Activated CD8-positive, alpha-beta T cell treated with anti-CD3 and anti-CD28 coated beads for 36 hours (primary cell): ENCODE measurements at regions of chr19 and their contacts with region 1.

Region 1: GRCh38 chr19:7355151-7355820 is 6.5 kb downstream of the ARHGEF18 start:
- DNase-seq: no peak
- ATAC-seq: no peak
- H3K4me3 Mint-ChIP-seq: no peak overlapping the region
- H3K27ac Mint-ChIP-seq: peak overlapping the region; percentile 76
- H3K4me1 Mint-ChIP-seq: peaks cover 56% of the 10 kb centered on the region
- H3K27me3 Mint-ChIP-seq: no peaks in the 10 kb centered on the region
- CTCF ChIP-seq: no peak

Region 2: GRCh38 chr19:7098701-7099596 is 256.3 kb before region 1 on chr19:
- CTCF ChIA-PET with region 1: interaction called, 13 read pairs
- POLR2A ChIA-PET with region 1: no interaction called
- intact Hi-C with region 1: no loop called
- DNase-seq: peak; percentile 90
- ATAC-seq: peak; percentile 93
- H3K4me3 Mint-ChIP-seq: peak overlapping the region; percentile 87
- H3K27ac Mint-ChIP-seq: peak overlapping the region; percentile 84
- H3K4me1 Mint-ChIP-seq: peaks cover 16% of the 10 kb centered on the region
- H3K27me3 Mint-ChIP-seq: no peaks in the 10 kb centered on the region
- CTCF ChIP-seq: no peak

Region 3: DNA sequence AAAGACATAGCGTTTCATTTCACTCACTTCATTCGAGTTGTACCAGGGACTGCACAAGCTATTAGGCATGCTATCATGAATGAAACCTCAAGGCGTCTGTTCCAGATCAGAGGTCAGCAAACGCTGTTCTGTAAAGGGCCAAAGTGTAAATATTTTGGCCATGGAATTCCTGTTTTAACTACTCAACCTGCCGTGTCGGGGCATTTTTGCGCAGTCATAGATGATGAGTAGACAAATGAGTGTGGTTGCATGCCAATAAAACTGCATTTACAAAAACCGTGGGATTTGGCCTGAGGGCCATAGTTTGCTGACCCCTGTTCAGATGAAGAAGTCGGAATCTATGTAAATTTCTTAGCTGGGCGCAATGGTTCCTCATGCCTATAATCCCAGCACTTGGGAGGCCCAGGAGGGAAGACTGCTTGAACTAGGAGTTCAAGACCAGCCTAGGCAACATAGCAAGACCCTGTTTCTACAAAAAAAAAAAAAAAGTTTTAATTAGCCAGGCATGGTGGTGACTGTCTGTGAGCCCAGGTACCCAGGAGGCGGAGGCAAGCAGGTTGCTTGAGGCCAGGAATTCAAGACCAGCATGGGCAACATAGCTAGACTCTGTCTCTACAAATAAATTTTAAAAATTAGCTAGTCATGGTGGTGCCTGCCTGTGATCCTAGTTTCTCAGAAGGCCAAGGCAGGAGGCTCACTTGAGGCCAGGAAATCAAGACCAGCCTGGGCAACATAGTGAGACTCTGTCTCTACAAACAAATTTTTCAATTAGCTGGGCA is 67.4 kb before region 1 on chr19:
- CTCF ChIA-PET with region 1: no interaction called
- POLR2A ChIA-PET with region 1: no interaction called
- intact Hi-C with region 1: no loop called
- DNase-seq: no peak
- ATAC-seq: no peak
- H3K4me3 Mint-ChIP-seq: no peak overlapping the region
- H3K27ac Mint-ChIP-seq: no peak overlapping the region
- H3K4me1 Mint-ChIP-seq: no peaks in the 10 kb centered on the region
- H3K27me3 Mint-ChIP-seq: peaks cover 9% of the 10 kb centered on the region
- CTCF ChIP-seq: no peak

Region 4: GRCh38 chr19:7366701-7367420 is 11.6 kb after region 1 on chr19:
- CTCF ChIA-PET with region 1: interaction called, 36 read pairs
- POLR2A ChIA-PET with region 1: interaction called, 5 read pairs
- intact Hi-C with region 1: no loop called
- DNase-seq: peak; percentile 57
- ATAC-seq: peak; percentile 90
- H3K4me3 Mint-ChIP-seq: no peak overlapping the region
- H3K27ac Mint-ChIP-seq: peak overlapping the region; percentile 73
- H3K4me1 Mint-ChIP-seq: peaks cover 22% of the 10 kb centered on the region
- H3K27me3 Mint-ChIP-seq: no peaks in the 10 kb centered on the region
- CTCF ChIP-seq: peak; percentile 79

Region 5: DNA sequence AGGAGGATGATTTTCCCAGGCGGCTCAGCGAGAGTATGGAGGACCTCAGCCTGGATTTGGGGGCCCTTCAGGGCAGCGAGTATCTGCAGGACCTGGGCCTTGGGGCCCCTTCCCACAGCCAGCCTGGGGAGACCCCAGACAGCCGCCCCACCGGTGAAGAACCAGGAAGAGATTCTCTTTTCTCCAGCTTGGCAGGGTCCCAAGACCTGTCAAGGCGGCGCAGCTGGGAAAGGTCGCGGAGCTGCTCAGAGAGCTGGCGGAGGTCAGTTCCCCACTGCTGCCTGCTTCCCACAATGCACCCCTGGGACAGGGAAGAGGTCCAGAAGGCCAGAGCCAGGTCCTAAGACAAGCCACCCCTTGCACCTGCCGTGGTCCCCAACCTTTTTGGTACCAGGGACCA is 17.5 kb after region 1 on chr19:
- CTCF ChIA-PET with region 1: interaction called, 14 read pairs
- POLR2A ChIA-PET with region 1: interaction called, 5 read pairs
- intact Hi-C with region 1: no loop called
- DNase-seq: no peak
- ATAC-seq: no peak
- H3K4me3 Mint-ChIP-seq: no peak overlapping the region
- H3K27ac Mint-ChIP-seq: no peak overlapping the region
- H3K4me1 Mint-ChIP-seq: peaks cover 2% of the 10 kb centered on the region
- H3K27me3 Mint-ChIP-seq: no peaks in the 10 kb centered on the region
- CTCF ChIP-seq: no peak

Region 6: DNA sequence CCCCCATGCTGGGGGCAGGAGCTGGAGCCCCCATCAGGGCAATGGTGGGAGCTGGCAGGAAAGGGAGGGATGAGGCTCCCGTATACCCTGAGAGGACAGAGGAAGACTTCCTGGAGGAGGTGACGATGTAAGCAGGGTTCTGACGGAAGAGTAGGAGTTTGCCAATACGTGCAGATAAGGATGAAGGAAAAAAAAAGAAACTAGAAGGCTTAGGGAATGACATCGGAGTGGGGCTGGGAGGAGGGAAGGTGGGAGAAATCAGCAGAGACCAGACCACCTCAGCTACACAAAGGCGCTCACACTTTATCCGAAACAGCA is 25.7 kb after region 1 on chr19:
- CTCF ChIA-PET with region 1: interaction called, 28 read pairs
- POLR2A ChIA-PET with region 1: interaction called, 3 read pairs
- intact Hi-C with region 1: no loop called
- DNase-seq: no peak
- ATAC-seq: no peak
- H3K4me3 Mint-ChIP-seq: no peak overlapping the region
- H3K27ac Mint-ChIP-seq: peak overlapping the region; percentile 67
- H3K4me1 Mint-ChIP-seq: peaks cover 2% of the 10 kb centered on the region
- H3K27me3 Mint-ChIP-seq: no peaks in the 10 kb centered on the region
- CTCF ChIP-seq: no peak

Region 7: GRCh38 chr19:7386308-7386707 is 31.0 kb after region 1 on chr19:
- CTCF ChIA-PET with region 1: interaction called, 28 read pairs
- POLR2A ChIA-PET with region 1: interaction called, 3 read pairs
- intact Hi-C with region 1: no loop called
- DNase-seq: peak; percentile 42
- ATAC-seq: peak; percentile 29
- H3K4me3 Mint-ChIP-seq: no peak overlapping the region
- H3K27ac Mint-ChIP-seq: peak overlapping the region; percentile 89
- H3K4me1 Mint-ChIP-seq: peaks cover 20% of the 10 kb centered on the region
- H3K27me3 Mint-ChIP-seq: no peaks in the 10 kb centered on the region
- CTCF ChIP-seq: no peak

Region 8: GRCh38 chr19:7497292-7497691 is 142.0 kb after region 1 on chr19:
- CTCF ChIA-PET with region 1: no interaction called
- POLR2A ChIA-PET with region 1: no interaction called
- intact Hi-C with region 1: no loop called
- DNase-seq: peak; percentile 33
- ATAC-seq: peak; percentile 62
- H3K4me3 Mint-ChIP-seq: no peak overlapping the region
- H3K27ac Mint-ChIP-seq: no peak overlapping the region
- H3K4me1 Mint-ChIP-seq: peaks cover 8% of the 10 kb centered on the region
- H3K27me3 Mint-ChIP-seq: peaks cover 24% of the 10 kb centered on the region
- CTCF ChIP-seq: peak; percentile 54